BJ (cell line): ENCODE measurements at regions of chr5 and their contacts with region 1.

Region 1: DNA sequence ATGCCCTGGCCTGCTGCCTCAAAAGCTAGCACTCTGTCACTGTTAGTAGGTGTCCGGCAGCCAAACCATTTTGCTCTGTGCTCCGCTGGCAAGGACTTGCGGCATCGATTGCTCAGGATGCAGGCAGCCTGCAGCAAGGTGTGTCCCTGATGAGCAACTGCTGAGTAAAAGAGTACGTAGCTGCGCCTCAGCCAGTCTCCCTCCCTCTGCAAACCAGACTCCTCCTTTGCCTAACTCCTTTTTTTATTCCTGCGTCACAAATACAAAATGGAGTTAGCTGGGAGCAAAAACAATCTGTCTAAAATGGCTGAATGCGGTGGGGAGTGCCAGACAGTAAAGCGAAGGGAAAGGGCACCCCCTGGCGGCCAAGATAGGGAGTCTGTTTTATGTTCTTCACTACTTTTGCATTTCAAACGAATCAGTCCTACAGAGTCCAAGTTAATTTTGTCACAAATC is 61.1 kb downstream of the DIAPH1 start:
- DNase-seq: peak; percentile 98
- H3K4me3 ChIP-seq: peak overlapping the region; percentile 23
- H3K27me3 ChIP-seq: no peaks in the 10 kb centered on the region
- CTCF ChIP-seq: peak; percentile 73

Region 2: GRCh38 chr5:141326088-141326854 is 231.4 kb before region 1 on chr5:
- CTCF ChIA-PET with region 1: interaction called, 85 read pairs
- POLR2A ChIA-PET with region 1: interaction called, 14 read pairs
- DNase-seq: no peak
- H3K4me3 ChIP-seq: peak overlapping the region; percentile 29
- H3K27me3 ChIP-seq: peaks cover 5% of the 10 kb centered on the region; the same call in 1 of the 2 replicates
- CTCF ChIP-seq: peak; percentile 79

Region 3: DNA sequence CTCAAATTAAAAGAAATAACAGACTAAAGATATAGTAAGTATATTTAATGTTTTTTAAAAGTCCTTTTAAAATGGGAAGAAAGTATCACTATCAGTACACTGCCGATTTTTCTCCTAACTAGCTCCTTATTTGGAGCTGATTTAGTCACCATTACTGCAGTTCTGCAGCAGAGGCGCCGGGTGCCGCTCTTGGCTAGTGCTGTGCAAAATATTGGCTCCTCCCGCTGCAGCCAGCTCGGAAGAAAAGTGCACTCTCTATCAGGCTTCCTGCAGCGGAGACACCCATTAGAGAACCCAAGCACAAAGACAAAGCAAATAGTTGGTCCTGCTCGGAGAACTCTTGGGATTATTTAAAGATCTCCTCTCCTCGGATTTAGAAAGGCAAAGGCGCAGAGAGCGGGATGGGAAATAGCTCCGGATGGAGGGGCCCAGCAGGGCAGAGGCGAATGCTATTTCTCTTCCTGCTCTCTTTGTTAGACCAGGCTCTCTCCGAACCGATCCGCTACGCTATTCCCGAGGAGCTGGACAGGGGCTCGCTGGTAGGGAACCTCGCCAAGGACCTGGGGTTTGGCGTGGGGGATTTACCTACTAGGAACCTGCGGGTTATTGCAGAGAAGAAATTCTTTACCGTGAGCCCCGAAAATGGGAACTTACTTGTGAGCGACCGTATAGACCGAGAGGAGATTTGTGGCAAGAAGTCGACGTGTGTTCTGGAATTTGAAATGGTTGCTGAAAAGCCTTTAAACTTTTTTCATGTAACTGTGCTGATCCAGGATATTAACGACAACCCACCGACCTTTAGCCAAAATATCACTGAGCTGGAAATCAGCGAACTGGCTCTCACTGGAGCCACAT is 187.5 kb before region 1 on chr5 and contains the start of gene PCDHGB3:
- CTCF ChIA-PET with region 1: interaction called, 17 read pairs
- POLR2A ChIA-PET with region 1: no interaction called
- DNase-seq: no peak
- H3K4me3 ChIP-seq: peak within 1 kb of the TSS; percentile 24
- H3K27me3 ChIP-seq: no peaks in the 10 kb centered on the region; the same call in none of the 2 replicates
- CTCF ChIP-seq: peak; percentile 61
- polyA plus RNA-seq, gene PCDHGB3: 2.7 and 3.0 TPM in 2 replicates

Region 4: DNA sequence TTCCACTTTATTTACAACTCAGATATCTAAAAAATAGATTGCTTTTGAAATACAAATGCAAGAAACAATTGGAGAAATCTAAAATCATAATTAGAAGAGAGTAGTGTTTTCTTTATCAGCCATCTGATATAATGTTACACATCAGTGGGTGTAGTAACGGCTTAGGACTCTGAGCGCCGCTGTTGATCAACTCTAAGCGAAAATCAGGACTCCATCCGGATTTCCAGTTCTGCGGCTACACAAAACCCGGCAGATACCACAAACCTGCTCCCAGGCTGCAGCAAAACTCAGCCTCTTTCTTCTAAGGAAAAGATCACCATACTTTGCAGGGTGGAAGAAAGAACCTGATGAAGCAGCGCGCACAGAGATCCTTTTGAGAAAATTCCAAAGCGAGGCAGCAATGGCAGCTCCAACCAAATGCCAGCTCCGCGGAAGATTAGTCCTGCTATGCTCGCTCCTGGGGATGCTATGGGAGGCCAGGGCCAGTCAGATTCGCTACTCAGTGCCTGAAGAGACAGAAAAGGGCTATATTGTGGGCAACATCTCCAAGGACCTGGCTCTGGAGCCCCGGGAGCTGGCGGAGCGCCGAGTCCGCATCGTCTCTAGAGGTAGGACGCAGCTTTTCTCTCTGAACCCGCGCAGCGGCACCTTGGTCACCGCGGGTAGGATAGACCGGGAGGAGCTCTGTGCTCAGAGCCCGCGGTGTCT is 155.0 kb before region 1 on chr5 and contains the start of gene PCDHGA9:
- CTCF ChIA-PET with region 1: interaction called, 28 read pairs
- POLR2A ChIA-PET with region 1: interaction called, 4 read pairs
- DNase-seq: no peak
- H3K4me3 ChIP-seq: no peak within 1 kb of the TSS
- H3K27me3 ChIP-seq: no peaks in the 10 kb centered on the region
- CTCF ChIP-seq: peak; percentile 35; the same call in 1 of the 2 replicates
- polyA plus RNA-seq, gene PCDHGA9: 0.97 and 1.2 TPM in 2 replicates

Region 5: GRCh38 chr5:141420855-141421496 is 136.7 kb before region 1 on chr5 and contains the start of gene PCDHGA11:
- CTCF ChIA-PET with region 1: interaction called, 112 read pairs
- POLR2A ChIA-PET with region 1: no interaction called
- DNase-seq: no peak
- H3K4me3 ChIP-seq: peak within 1 kb of the TSS; percentile 47
- H3K27me3 ChIP-seq: no peaks in the 10 kb centered on the region
- CTCF ChIP-seq: peak; percentile 58
- polyA plus RNA-seq, gene PCDHGA11: 5.4 and 7.4 TPM in 2 replicates

Region 6: DNA sequence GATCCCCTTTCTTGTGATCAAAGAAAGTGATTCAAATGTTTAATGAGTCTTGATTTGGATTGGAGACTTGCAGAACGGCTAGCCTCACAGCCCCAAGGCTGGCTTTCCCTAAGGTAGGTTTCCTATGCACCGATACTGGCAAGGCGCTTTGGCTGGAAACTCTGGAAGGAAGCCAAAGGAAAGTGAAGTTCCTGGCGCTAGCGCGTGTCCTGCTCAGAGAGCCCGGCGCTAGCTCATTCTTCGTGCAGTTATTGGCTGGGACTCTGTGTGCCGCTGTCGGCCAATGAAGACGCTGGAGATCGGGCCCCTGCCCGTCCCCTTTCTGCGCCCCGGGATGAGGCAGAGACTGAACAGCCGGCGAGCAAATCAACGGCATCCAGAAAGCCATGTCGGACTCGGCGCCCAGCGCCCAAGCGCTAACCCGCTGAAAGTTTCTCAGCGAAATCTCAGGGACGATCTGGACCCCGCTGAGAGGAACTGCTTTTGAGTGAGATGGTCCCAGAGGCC is 82.0 kb before region 1 on chr5 and contains the start of gene PCDHGC3:
- CTCF ChIA-PET with region 1: interaction called, 37 read pairs
- POLR2A ChIA-PET with region 1: interaction called, 4 read pairs
- DNase-seq: peak; percentile 64
- H3K4me3 ChIP-seq: peak within 1 kb of the TSS; percentile 53
- H3K27me3 ChIP-seq: no peaks in the 10 kb centered on the region
- CTCF ChIP-seq: 0 out of 2 replicates have a peak, but pooled peaks have one; percentile 12
- polyA plus RNA-seq, gene PCDHGC3: 36.5 and 56.3 TPM in 2 replicates

Region 7: GRCh38 chr5:141524604-141525597 is 32.8 kb before region 1 on chr5:
- CTCF ChIA-PET with region 1: interaction called, 67 read pairs
- POLR2A ChIA-PET with region 1: no interaction called
- DNase-seq: peak; percentile 85
- H3K4me3 ChIP-seq: no peak overlapping the region
- H3K27me3 ChIP-seq: no peaks in the 10 kb centered on the region
- CTCF ChIP-seq: peak; percentile 99

Region 8: DNA sequence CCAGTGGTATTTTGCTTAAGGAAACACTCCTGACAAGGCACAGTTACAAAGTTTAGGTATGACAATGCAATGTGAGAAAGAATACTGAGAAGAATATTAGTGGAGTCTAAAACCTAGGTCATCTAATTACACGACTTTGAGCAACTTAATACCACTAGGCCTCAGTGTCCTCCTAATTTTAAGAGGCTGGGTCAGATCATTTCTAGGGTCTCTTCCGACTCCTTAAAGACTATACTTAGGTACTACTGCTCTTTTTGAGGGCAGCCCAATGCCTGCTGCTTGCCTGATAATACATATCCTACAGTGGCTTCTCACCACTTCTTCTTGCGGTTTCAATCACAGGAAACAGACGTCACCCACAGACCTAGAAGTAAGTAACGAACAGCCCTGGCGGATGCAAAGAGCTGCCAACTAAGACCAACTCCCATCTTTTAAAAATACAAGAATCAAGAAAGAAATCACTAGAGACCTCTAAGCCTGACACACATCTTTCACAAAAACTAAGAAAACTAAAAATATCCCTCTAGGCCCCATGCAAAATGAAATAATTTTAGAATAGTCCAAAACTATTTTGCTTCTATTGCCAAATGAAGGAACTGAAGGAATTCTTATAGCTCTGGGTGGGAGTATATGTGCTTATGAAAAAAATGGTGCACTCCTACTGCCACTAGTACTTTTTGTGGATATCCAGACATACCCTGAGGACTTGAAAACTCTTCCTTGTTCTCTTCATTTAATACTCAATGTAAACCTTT is 48.0 kb after region 1 on chr5:
- CTCF ChIA-PET with region 1: no interaction called
- POLR2A ChIA-PET with region 1: no interaction called
- DNase-seq: no peak
- H3K4me3 ChIP-seq: no peak overlapping the region
- H3K27me3 ChIP-seq: no peaks in the 10 kb centered on the region
- CTCF ChIP-seq: no peak

Region 9: DNA sequence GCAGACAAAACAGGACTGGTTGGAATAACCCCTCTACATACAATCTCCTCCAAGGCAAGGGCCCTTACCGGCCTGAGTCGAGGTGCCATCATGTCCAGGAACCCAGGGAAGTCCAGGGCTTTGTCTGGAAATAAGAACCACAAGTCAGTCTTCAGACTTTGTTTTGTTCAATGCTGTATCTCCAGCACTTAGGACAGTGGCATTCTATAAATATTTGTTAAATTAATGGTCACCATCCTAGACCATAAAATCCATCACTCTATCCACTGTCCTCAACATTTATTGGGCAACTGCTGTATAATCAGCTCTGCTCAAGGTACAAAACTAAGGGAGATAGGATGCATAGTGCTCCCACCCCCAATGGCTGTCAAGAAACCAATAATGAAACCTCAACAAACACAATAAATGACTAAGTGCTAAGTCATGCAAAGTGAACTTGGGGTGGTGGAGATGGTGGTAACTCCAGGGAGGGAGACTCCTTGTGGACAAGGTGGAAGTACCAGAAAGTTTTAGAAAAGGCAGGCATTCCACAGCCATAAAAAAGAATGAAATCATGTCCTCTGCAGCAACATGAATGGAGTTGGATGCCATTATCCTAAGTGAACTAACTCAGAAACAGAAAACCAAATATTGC is 84.0 kb after region 1 on chr5:
- CTCF ChIA-PET with region 1: no interaction called
- POLR2A ChIA-PET with region 1: no interaction called
- DNase-seq: no peak
- H3K4me3 ChIP-seq: no peak overlapping the region
- H3K27me3 ChIP-seq: no peaks in the 10 kb centered on the region
- CTCF ChIP-seq: peak; percentile 44

Region 10: DNA sequence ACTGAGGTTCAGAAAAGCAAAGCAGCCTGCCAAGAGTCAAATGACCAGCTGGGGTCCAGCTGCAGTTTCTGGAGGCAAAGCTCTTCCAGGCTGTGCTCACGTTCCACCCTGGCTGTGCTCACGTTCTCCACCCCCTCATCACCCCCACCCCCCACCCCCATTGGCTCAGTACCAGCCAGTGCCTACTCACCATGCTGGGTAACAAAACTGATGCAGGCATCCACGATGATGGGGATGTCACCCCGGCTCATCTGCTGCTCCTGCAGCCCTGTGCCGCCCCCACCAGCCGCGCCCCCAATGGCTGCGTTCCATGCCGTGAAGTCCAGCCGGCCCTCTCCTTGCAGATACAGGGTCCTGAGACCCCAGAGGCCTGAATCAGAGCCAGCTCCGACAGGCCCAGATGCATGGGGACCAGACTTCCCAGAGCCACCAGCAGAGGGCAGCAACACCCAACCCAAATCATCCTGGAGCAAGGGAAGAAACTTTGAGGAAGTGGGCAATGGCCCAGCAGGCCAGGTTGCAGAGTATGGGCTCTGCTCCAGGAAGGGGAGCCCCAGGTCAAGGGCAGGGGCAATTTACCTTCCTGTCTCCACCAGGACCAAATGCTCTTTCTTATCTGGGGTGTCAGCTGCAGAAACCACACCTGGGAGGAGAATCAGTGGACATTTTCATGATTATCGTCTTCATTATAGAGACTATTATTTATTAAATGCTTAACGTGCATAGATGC is 107.2 kb after region 1 on chr5:
- CTCF ChIA-PET with region 1: no interaction called
- POLR2A ChIA-PET with region 1: no interaction called
- DNase-seq: no peak
- H3K4me3 ChIP-seq: no peak overlapping the region
- H3K27me3 ChIP-seq: no peaks in the 10 kb centered on the region
- CTCF ChIP-seq: peak; percentile 96